Cardiac septum (tissue), 1 donor: ENCODE measurements at regions of chr1 and their contacts with region 1.

Region 1: DNA sequence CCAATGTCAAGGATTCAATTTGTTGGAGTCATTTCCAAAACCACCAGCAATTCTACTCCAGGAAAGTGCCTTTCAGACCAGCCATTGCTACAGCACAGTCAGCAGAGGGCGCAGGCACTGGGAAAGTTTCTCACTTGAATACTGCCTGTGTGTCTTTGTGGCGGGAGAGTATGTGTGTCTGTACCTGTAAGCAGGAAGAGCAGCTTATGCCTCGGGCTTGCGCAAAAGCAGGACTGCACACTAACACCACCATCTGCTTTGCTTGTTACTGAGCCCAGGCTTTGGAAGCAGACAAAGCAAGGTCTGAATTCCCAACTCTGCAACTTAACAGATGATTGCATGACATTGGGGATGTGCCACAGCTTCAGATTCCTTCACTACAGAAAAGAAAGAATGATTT is 7.0 kb upstream of the CTSE start:
- DNase-seq: no peak

Region 2: DNA sequence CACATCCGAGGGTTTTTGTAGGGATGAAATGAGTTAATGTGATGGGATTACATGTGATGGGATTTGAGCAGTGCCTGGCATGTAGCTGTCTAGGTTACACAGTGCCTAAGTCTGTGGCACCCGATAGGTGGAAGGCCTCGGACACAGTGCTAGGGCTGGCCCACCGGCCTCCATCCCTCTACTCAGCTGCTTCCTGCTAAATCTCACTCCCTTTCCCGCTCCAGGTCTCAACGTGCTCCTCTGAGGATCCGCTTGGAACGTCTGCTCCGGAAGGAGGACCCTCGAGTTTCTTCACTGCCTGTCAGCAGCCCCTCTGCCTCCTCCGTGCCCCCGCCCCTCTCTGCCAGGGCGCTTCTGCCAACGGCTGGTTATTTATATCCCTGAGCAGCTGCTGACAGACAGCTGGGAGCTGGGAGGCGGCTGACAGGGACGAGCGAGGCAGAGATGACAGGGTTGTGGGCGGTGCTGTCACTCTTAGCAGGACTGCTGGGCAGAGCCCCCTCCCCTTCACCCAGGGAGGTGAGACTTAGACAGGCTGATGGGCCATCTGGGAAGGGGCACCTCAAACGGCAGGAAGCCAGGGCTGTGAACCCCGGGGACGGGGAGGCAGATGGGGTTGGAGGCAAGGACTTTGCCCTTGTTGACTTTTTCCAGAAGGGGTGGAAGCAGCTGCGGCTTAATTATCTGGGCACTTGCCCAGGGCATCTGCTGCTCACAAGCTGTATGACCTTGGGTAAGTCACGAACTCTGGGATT is 1318.6 kb before region 1 on chr1:
- intact Hi-C with region 1: no loop called
- DNase-seq: peak; percentile 80

Region 3: GRCh38 chr1:205983925-205984725 is 46.6 kb before region 1 on chr1:
- intact Hi-C with region 1: loop called (anchors 2 kb)
- DNase-seq: no peak

Region 4: GRCh38 chr1:206066479-206067171 is 35.9 kb after region 1 on chr1:
- intact Hi-C with region 1: no loop called
- DNase-seq: no peak